IMR-90 (cell line): ENCODE measurements at regions of chr2 and their contacts with region 1.

Region 1: DNA sequence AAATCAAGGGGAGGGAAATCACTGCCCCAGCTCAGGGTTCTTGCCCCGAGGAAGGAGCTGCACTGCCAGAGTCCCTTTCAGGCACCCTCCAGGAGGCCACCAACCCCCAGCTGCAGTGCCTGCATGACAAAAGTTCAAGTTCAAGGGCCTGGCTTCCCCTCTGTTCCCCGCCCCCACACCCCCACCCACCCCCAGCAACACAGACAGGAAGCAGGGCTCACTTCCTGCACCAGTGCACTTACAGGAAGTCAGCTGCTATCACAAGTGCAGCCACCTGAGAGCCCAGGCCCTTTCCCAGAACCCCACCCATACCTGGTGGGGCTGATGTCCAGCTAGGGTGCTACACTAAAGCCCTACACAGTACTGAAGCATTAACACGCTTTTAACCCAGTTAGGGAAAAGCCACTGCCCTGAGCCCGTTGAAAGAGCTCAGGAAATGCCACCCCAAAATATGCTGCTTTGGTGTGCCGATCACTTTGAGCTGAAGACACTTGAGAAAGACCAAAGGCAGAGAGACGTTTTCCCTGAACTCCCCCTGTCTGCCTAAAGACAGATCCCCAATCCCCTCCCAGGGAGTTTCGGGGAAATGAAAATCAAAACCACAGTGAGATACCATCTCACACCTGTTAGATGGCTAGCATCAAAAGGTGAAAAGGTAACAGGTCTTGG is 109.9 kb upstream of the CAB39 start:
- DNase-seq: no peak
- ATAC-seq: no peak
- H3K4me3 ChIP-seq: no peak overlapping the region
- H3K27ac ChIP-seq: no peak overlapping the region
- H3K4me1 ChIP-seq: no peaks in the 10 kb centered on the region
- H3K27me3 ChIP-seq: no peaks in the 10 kb centered on the region; the same call in 1 of the 2 replicates
- CTCF ChIP-seq: no peak
- POLR2A ChIP-seq: no peak
- RAD21 ChIP-seq: no peak

Region 2: GRCh38 chr2:229800997-229801754 is 801.5 kb before region 1 on chr2:
- CTCF ChIA-PET with region 1: no interaction called
- POLR2A ChIA-PET with region 1: no interaction called
- dilution Hi-C with region 1: no loop called
- in situ Hi-C with region 1: loop called (anchors 25 kb)
- intact Hi-C with region 1: no loop called
- DNase-seq: peak; percentile 65
- ATAC-seq: peak; percentile 45
- H3K4me3 ChIP-seq: no peak overlapping the region
- H3K27ac ChIP-seq: peak overlapping the region; percentile 45; the same call in 1 of the 2 replicates
- H3K4me1 ChIP-seq: peaks cover 2% of the 10 kb centered on the region; the same call in 1 of the 2 replicates
- H3K27me3 ChIP-seq: no peaks in the 10 kb centered on the region
- CTCF ChIP-seq: peak; percentile 63
- POLR2A ChIP-seq: no peak
- RAD21 ChIP-seq: peak; percentile 56